ENCODE measurements at regions of chr15 and their contacts with region 1.

Region 1: DNA sequence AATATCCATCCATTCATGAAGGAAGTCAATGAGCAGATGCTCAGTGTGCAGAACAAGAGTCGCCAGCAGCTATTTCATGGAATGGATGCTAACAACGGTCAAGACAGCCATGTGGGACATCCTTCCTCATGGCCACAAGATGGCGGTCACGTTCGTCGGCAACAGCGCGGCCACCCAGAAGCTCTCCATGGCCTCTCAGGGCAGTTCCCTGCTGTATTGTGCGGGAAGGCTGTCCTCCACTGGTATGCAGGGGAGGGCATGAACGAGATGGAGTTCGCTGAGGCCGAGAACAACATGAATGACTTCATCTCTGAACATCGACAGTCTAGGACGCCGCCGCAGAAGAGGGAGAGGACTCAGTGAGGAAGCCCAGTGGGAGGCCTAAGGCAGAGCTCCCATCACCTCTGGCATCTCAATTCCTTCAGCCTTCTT is 208.3 kb downstream of the TJP1 start:
- DNase-seq: peak; percentile 78 to 87
- ATAC-seq: peak; percentile 95 to 98
- H3K4me3 ChIP-seq: no peak overlapping the region
- H3K27ac ChIP-seq: peak overlapping the region in 1 of 2 experiments; percentile 27; a peak in 1 of 6 replicates
- H3K4me1 ChIP-seq: peaks cover 9% of the 10 kb centered on the region; the same call in 2 of the 3 replicates
- CTCF ChIP-seq: peak; percentile 72
- EP300 ChIP-seq: no peak
- POLR2A ChIP-seq: no peak
- RAD21 ChIP-seq: peak; percentile 81 to 86

Region 2: DNA sequence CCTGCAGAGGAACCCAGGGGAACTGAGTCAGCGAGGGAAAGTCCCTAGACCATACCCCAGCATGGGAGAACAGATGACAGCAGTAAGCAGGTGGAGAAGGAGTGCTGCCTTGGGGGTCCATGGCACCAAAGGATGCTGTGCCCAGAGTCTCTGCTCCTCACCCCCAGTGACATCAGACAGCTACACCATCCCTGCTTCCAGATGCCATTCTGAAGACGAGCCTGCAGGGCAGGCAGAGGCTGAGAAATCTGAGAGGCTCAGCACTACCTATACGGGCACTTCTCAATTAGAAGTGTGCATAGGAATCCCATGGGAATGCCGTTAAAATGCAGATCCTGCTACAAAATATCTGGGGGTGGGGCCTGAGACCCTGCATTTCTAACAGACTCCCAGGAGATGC is 133.0 kb before region 1 on chr15:
- CTCF ChIA-PET with region 1: no interaction called
- POLR2A ChIA-PET with region 1: no interaction called
- DNase-seq: no peak
- ATAC-seq: no peak
- H3K4me3 ChIP-seq: no peak overlapping the region
- H3K27ac ChIP-seq: no peak overlapping the region
- H3K4me1 ChIP-seq: no peaks in the 10 kb centered on the region
- CTCF ChIP-seq: no peak
- EP300 ChIP-seq: no peak
- POLR2A ChIP-seq: no peak
- RAD21 ChIP-seq: no peak

Region 3: GRCh38 chr15:29533667-29534066 is 80.3 kb before region 1 on chr15:
- CTCF ChIA-PET with region 1: no interaction called
- POLR2A ChIA-PET with region 1: no interaction called
- DNase-seq: no peak
- ATAC-seq: no peak; a peak in 1 of 6 replicates
- H3K4me3 ChIP-seq: no peak overlapping the region
- H3K27ac ChIP-seq: no peak overlapping the region
- H3K4me1 ChIP-seq: peaks cover 8% of the 10 kb centered on the region; the same call in 1 of the 3 replicates
- CTCF ChIP-seq: no peak
- EP300 ChIP-seq: no peak
- POLR2A ChIP-seq: no peak
- RAD21 ChIP-seq: no peak

Region 4: DNA sequence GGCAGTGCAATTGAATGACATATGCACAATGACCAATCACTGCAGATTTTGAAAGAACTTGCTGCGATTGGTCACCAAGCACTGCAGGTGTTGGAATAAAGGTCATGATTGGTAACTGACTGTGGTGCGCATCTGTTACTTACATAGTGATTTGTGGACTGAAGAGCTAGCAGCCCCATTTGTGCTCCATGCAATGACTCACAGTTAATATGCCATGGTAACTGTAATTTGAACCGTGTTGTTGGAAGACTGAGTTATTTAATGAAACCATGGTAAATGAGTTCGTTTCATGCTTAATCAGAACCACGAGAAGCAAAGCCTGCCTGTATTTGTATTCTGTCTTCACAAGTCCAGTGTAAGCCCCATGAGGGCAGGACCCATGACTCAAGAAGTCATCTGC is 12.2 kb before region 1 on chr15:
- CTCF ChIA-PET with region 1: interaction called, 21 read pairs
- POLR2A ChIA-PET with region 1: no interaction called
- DNase-seq: no peak
- ATAC-seq: no peak
- H3K4me3 ChIP-seq: no peak overlapping the region
- H3K27ac ChIP-seq: no peak overlapping the region
- H3K4me1 ChIP-seq: no peaks in the 10 kb centered on the region
- CTCF ChIP-seq: no peak
- EP300 ChIP-seq: no peak
- POLR2A ChIP-seq: no peak
- RAD21 ChIP-seq: no peak

Region 5: DNA sequence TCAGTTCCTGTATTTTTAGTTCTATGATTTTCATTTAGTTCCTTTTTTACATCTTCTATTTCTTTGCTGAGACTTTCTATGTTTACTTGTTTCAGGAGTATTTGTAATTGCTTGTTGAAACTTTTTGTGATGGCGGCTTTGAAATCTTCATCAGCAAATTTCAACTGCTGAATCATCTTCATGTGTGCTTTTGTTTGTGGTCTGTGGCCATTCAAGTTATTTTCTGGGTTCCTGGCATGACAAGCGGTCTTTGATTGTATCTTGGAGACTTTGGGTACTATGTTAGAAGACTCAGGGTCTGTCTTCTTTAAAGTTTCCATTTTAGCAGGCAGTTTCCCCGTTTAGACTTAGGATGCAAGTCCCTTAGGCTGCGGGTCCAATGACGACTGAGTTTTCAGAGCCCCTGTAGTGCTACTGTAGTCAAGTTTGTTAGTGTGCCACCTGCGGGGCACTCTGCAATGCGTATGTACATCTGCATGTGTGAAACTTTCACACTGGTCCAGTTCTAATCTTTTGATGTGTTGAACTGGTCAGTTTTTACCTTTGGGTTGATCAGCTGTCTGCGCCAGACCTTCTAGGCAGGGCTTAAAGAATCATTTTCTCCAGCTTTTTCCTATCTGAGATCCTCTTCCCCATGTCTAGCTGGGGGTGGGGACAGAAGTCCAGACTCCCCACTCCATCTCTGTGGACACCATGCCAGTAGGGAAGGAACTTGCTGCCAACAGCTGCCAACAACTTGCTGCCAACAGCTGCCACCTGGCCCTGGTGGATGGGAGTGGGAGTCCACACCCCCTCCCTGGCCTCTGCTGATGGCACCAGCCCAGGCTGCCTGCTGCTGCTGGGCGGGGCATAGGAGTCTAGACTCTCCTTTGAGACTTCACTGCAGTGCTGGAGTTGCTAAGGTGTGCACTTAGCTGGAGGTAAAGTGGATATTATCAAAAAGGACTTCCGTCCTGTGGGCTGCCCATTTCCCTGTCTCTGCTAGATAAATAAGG is 17.4 kb after region 1 on chr15:
- CTCF ChIA-PET with region 1: interaction called, 46 read pairs
- POLR2A ChIA-PET with region 1: no interaction called
- DNase-seq: no peak
- ATAC-seq: peak in 1 of 2 experiments; percentile 35; a peak in 2 of 6 replicates
- H3K4me3 ChIP-seq: no peak overlapping the region
- H3K27ac ChIP-seq: no peak overlapping the region
- H3K4me1 ChIP-seq: no peaks in the 10 kb centered on the region
- CTCF ChIP-seq: no peak
- EP300 ChIP-seq: no peak
- POLR2A ChIP-seq: no peak
- RAD21 ChIP-seq: no peak